ENCODE measurements at regions of chr5 and their contacts with region 1.

Region 1: DNA sequence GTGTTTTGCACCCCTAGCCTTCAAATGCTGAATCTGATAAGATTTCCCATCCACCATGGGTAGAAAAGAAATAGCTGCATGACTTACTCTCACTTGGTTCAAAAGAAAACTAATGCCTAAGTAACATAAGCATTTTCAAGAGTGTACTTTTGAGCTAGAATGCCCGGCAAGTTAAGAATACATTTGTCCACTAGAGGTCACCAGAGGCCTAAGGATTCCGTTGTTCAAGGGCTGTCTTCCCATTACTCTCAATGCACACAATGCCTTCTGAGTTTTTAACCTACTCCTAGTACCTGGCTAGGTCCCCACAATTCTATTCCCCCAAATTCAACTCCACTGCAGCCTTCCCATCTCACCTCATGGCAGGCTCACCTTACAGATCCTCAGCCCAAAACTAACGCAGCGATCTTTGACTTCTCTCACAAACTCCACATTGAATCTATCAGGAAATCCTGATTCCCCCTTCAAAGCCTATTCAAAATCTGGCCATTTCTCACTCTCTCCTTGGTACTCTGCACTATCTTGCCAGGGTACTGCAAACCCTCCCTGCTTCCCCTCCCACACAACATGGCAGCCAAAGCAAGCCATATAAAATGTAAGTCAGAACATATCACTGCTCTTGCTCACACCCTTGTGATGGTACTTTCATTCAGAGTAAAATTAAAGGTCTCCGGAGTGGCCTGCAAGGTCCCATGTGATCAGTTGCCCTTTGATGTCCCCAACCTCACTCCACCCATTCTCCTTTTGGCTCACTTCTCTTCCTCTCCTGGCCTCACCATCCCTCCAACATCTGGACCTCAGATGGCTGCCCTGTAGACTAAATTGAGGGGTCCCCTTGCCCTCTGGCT is 13.4 kb downstream of the OXCT1 start:
- DNase-seq: peak; percentile 45
- H3K4me3 ChIP-seq: no peak overlapping the region
- H3K27ac ChIP-seq: no peak overlapping the region
- H3K27me3 ChIP-seq: no peaks in the 10 kb centered on the region
- CTCF ChIP-seq: peak; percentile 82

Region 2: DNA sequence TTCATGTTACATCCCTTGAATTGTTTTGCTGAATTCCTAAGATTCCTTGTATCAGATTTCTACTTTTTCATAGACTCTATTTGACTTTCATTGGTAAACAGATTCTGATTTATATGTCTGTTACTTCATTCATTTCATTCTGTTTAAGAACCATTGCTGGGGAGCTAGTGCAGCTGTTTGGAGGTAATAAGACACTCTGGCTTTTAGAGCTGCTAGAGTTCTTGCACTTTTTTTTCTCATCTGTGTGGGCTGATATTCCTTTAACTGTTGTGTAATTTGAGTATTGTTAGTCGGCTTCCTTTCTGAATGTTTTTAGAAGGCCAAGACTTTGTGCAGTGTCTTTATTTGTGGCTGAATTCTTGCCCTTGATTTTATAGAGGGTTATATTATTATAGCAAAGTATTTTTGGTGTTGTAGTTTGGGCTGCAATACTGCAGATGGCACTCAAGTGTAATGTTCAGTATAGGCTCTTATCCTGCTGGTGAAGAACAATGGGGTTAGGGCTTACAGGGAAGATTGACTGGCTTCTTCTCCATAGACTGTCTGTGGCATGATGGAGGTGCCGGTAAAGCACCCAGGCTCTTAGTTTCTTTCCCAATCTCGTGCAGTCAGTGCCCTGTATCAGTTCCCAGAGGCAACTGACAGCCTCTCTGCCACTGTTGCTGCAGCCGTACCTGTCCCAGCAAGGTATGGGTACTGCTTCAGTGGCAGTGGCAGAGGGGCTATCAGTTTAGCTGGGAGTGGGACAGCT is 148.8 kb before region 1 on chr5:
- CTCF ChIA-PET with region 1: interaction called, 16 read pairs
- POLR2A ChIA-PET with region 1: no interaction called
- DNase-seq: peak; percentile 51
- H3K4me3 ChIP-seq: no peak overlapping the region
- H3K27ac ChIP-seq: no peak overlapping the region
- H3K27me3 ChIP-seq: no peaks in the 10 kb centered on the region
- CTCF ChIP-seq: peak; percentile 73

Region 3: DNA sequence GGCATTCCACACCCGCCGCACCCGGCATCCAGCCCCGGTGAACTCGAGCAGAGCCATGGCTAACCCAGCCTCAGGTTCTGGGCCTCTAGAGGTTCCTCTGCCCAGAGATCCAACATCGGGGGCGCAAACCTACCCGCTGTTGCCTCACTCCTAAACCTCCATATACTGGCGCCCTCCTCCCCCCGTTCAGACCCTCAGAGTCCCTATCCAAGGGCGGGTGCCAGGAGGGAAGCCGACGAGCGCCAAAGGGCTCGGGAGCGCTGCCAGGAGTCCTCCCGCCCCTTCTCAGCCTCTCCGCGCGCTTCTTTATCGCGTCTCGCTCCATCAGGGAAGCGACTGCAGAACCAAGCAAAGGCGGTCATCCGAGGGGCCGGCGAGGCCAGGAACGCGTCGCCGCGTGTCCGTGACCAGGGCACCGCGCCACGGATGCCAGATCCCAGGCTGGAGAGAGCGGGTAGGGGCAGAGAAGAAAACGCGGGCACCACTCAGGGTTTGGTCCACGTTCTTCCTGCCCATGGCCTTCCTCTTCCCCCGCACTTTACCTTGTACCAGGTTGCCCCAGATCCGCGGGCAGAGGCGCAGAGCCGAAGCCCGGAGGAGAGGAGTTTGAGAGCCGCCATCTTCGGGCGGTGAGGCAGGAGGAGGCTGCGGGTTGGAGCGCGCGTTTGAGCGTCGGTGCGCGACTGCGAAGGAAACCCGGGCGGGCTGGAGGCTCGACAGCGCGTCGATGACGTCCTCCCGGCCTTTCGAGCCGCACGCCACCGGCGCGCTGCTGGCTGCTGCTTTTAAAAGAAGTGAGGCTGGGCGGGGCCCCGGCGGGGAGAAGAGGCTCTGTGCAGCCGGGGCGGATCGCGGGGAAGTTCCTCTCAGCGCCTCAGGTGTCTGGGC is 13.1 kb after region 1 on chr5 and contains the start of gene OXCT1:
- CTCF ChIA-PET with region 1: interaction called, 11 read pairs
- POLR2A ChIA-PET with region 1: no interaction called
- DNase-seq: peak; percentile 56
- H3K4me3 ChIP-seq: peak within 1 kb of the TSS; percentile 83
- H3K27ac ChIP-seq: peak within 1 kb of the TSS; percentile 62
- H3K27me3 ChIP-seq: no peaks in the 10 kb centered on the region
- CTCF ChIP-seq: no peak
- polyA plus RNA-seq, gene OXCT1: 21.3 and 31.7 TPM in 2 replicates

Region 4: DNA sequence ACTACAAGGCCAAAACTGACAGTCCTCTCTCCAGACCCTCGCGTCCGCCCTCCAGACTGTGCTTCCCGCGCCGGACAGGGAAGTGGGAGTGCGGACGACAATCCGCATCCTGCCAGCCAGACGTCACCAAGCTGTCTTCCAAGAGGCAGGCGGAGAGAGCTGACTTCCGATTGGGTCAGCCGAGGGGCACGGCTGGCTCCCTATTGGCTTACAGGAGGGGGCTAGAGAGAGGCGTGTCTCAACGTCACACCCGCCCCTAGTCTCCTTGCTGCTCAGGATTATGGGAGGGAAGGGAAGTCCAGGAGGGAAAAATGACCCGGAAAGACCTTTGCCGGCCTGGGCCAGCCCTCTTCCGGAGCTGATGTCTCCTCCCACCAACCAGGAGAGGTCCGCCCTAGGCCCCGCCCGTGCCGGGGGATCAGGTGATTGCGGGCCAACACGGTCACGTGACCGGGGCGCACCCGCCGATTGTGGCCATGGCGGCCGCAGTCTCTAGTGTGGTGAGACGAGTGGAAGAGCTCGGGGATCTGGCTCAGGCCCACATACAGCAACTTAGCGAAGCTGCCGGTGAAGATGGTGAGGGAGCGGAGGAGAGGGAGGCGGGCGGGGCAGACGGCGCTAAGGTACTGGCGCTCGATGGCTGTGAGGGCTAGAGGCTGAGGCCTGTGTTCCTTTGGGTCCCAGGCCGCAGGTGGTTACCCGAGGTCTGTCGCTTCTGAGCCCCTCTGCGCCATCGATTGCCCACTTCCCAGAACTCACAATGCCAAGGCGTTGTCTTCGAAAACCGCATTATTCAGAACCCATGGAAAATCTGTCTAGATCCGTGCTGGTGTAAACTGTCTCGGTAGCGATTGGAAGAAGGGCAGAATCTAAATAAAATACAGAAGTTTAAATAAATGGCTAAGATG is 47.3 kb after region 1 on chr5 and contains the start of gene RIMOC1:
- CTCF ChIA-PET with region 1: interaction called, 13 read pairs
- POLR2A ChIA-PET with region 1: no interaction called
- DNase-seq: peak; percentile 99
- H3K4me3 ChIP-seq: peak within 1 kb of the TSS; percentile 95
- H3K27ac ChIP-seq: peak within 1 kb of the TSS; percentile 84
- H3K27me3 ChIP-seq: no peaks in the 10 kb centered on the region
- CTCF ChIP-seq: no peak
- polyA plus RNA-seq, gene RIMOC1: 26.8 and 43.1 TPM in 2 replicates

Region 5: DNA sequence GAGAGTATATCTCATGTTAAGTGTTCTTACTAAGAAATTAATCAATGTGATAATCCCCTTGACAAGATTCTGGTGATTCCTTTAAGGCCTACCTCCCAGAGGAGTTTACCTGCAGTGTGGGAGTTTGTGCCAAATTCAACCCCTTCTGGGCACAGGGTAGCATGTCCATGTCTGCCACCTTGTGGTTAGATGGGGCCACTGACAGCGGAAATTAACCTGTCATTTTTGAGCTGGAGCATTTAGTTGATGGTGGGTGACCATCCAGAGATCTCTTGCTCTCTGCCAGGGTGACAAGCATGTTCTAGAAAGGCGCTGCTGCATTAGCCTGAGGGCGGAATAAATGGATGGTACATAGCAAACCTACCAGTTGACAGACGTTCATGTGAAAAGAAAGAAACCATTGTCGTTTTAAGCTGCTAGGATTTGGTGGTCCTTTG is 200.4 kb after region 1 on chr5:
- CTCF ChIA-PET with region 1: interaction called, 182 read pairs
- POLR2A ChIA-PET with region 1: no interaction called
- DNase-seq: peak; percentile 0
- H3K4me3 ChIP-seq: no peak overlapping the region
- H3K27ac ChIP-seq: no peak overlapping the region
- H3K27me3 ChIP-seq: no peaks in the 10 kb centered on the region
- CTCF ChIP-seq: peak; percentile 71

Region 6: DNA sequence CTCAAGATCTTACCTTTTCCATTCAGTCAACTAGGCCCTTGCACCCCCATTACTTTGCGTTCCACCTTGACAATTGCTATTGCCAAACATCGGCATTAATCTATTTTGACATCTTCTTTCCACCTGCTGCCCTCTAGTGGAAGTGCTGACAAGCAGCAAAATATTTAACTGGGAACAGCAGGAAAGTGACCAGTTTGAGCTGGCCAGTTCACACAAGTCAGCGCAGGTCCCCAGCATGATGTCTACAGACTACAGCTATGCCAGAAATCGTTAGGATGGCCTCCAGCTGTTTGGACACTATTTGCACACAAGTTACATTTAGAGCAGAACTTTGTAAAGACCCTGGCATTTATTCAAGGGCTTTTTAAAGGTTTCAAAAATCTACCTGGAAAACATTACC is 726.5 kb after region 1 on chr5:
- CTCF ChIA-PET with region 1: interaction called, 18 read pairs
- POLR2A ChIA-PET with region 1: no interaction called
- DNase-seq: no peak
- H3K4me3 ChIP-seq: no peak overlapping the region
- H3K27ac ChIP-seq: no peak overlapping the region
- H3K27me3 ChIP-seq: no peaks in the 10 kb centered on the region
- CTCF ChIP-seq: peak; percentile 77

Region 7: DNA sequence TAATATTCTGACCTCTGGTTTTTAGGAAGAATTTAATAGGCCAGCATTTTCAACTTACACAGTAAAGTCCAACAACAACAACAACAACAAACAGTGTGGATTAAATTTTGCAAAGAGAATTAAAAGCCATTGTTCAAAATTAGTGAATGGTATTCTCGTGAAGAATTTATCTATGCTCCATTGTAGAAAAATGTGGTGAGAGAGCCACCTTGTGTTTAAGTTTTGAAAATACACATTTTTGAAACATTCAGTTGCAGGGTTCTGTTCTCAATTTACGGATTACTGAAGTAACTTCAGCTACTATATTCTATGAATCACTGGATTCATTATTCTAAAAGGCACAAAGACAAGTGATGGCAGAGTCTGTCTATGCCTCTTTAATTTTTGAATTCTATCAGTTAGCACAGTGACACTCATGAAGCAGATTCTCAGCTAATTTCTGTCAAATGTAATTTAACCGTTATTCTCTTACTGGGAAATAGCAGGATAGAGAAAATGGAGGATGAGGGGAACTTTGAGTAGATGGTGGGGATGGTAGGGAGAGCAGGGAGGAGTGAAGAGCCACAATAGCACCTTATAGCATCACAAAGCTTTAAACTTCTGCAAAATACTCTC is 910.7 kb after region 1 on chr5:
- CTCF ChIA-PET with region 1: interaction called, 18 read pairs
- POLR2A ChIA-PET with region 1: no interaction called
- DNase-seq: no peak
- H3K4me3 ChIP-seq: no peak overlapping the region
- H3K27ac ChIP-seq: no peak overlapping the region
- H3K27me3 ChIP-seq: no peaks in the 10 kb centered on the region
- CTCF ChIP-seq: peak; percentile 51